ENCODE measurements at regions of chr1 and their contacts with region 1.

Region 1: DNA sequence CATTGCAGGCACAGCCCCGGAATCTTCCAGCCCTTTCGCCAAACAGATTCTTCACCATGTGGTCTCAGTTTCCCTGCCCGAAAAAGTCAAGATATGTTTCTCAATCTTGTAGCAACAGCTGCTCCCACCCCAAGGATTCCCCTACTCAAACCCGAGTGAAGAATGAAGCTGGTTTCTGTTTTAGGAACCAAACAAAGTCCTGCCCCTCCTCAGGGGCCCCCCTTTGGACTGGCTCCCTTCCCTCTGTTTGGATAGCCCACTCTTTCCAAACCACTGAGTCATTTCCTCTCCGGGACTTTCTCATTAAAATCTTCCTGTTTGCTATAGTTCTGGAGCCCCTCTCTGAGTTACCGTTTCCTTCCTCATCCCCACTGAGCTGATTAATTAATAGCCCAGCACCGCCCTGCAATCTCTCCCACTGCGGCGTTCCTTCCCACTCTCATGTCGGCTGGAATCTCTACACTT is 100.9 kb downstream of the TSEN15 start:
- DNase-seq: peak in 1 of 2 donors; percentile 65
- ATAC-seq: peak; percentile 62 to 92 (median 88)
- H3K4me3 ChIP-seq: peak overlapping the region in 9 of 10 donors; percentile 26 to 58 (median 45)
- H3K27ac ChIP-seq: peak overlapping the region; percentile 66 to 88 (median 78)
- H3K4me1 ChIP-seq: peaks cover 4 to 42% (median 31%) of the 10 kb centered on the region in 9 donors
- H3K27me3 ChIP-seq: no peaks in the 10 kb centered on the region
- CTCF ChIP-seq: no peak

Region 2: GRCh38 chr1:184176058-184176457 is 23.6 kb after region 1 on chr1:
- intact Hi-C with region 1: no loop called
- DNase-seq: no peak
- ATAC-seq: no peak
- H3K4me3 ChIP-seq: no peak overlapping the region
- H3K27ac ChIP-seq: no peak overlapping the region
- H3K4me1 ChIP-seq: no peaks in the 10 kb centered on the region
- H3K27me3 ChIP-seq: no peaks in the 10 kb centered on the region
- CTCF ChIP-seq: no peak

Region 3: GRCh38 chr1:184194236-184194635 is 41.8 kb after region 1 on chr1:
- intact Hi-C with region 1: no loop called
- DNase-seq: no peak
- ATAC-seq: no peak
- H3K4me3 ChIP-seq: no peak overlapping the region
- H3K27ac ChIP-seq: no peak overlapping the region
- H3K4me1 ChIP-seq: peaks cover 0 to 36% (median 11%) of the 10 kb centered on the region in 9 donors
- H3K27me3 ChIP-seq: no peaks in the 10 kb centered on the region
- CTCF ChIP-seq: no peak

Region 4: GRCh38 chr1:184212649-184213314 is 60.3 kb after region 1 on chr1:
- intact Hi-C with region 1: loop called in 1 of 10 experiments (anchors 5 kb)
- DNase-seq: no peak
- ATAC-seq: peak in 1 of 8 donors; percentile 66
- H3K4me3 ChIP-seq: no peak overlapping the region
- H3K27ac ChIP-seq: peak overlapping the region in 1 of 10 donors; percentile 14
- H3K4me1 ChIP-seq: peaks cover 0 to 10% (median 0%) of the 10 kb centered on the region in 9 donors
- H3K27me3 ChIP-seq: no peaks in the 10 kb centered on the region
- CTCF ChIP-seq: no peak